Activated CD8-positive, alpha-beta memory T cell treated with anti-CD3 and anti-CD28 coated beads, Interleukin-2, amount 10 ng/mL, durations not matched to agents 7 days and 5 days (primary cell): ENCODE measurements at regions of chr22 and their contacts with region 1.

Region 1: GRCh38 chr22:50250555-50251476 is at the start of gene HDAC10:
- DNase-seq: peak; percentile 92
- ATAC-seq: peak; percentile 88
- H3K4me3 Mint-ChIP-seq: peak within 1 kb of the TSS; percentile 84
- H3K27ac Mint-ChIP-seq: peak within 1 kb of the TSS; percentile 85
- H3K4me1 Mint-ChIP-seq: peaks cover 27% of the 10 kb centered on the region
- H3K27me3 Mint-ChIP-seq: no peaks in the 10 kb centered on the region
- total RNA-seq, gene HDAC10: 75.2 to 96.3 TPM

Region 2: DNA sequence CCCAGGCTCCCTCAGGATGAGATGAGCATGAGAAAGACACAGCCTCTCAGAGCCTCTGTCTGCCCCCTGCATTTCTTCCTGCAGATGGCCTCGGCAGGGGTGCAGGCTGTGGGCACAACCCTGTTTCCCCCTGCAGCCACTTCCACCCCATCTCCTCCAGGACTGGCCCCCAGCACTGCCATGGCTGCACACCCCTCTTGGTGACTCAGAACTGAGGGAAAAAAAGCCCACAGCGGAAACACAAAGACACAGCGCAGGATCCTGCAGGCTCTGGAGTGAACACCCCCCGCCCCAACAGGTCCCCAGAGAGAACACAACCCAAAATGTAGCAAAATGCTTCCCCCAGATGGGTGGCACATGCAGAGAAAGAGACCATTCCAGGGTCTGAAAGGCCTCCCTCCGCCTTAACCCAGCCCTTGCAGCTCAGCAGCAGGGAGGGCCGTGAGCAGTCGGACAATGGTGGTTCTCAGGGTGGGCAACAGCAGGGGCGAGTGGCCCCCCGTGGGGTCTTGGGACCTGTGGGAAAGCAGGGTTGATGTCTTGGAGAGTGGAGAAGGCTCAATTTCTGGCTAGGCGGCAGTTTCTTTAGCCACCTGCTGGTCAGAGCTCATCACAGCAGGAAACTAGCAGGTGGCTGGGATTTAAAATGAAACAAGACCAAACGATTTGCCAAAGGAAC is 13.9 kb before region 1 on chr22:
- CTCF ChIA-PET with region 1: interaction called, 22 read pairs
- DNase-seq: no peak
- ATAC-seq: no peak
- H3K4me3 Mint-ChIP-seq: no peak overlapping the region
- H3K27ac Mint-ChIP-seq: no peak overlapping the region
- H3K4me1 Mint-ChIP-seq: peaks cover 21% of the 10 kb centered on the region
- H3K27me3 Mint-ChIP-seq: no peaks in the 10 kb centered on the region

Region 3: GRCh38 chr22:50269970-50270665 is 19.3 kb after region 1 on chr22 and contains the start of gene MAPK11:
- CTCF ChIA-PET with region 1: interaction called, 25 read pairs
- DNase-seq: peak; percentile 82
- ATAC-seq: peak; percentile 61
- H3K4me3 Mint-ChIP-seq: peak within 1 kb of the TSS; percentile 58
- H3K27ac Mint-ChIP-seq: peak within 1 kb of the TSS; percentile 46
- H3K4me1 Mint-ChIP-seq: peaks cover 14% of the 10 kb centered on the region
- H3K27me3 Mint-ChIP-seq: peaks cover 5% of the 10 kb centered on the region
- total RNA-seq, gene MAPK11: 16.5 to 18.5 TPM

Region 4: GRCh38 chr22:50282361-50282760 is 31.5 kb after region 1 on chr22:
- CTCF ChIA-PET with region 1: no interaction called
- DNase-seq: no peak
- ATAC-seq: no peak
- H3K4me3 Mint-ChIP-seq: no peak overlapping the region
- H3K27ac Mint-ChIP-seq: no peak overlapping the region
- H3K4me1 Mint-ChIP-seq: no peaks in the 10 kb centered on the region
- H3K27me3 Mint-ChIP-seq: no peaks in the 10 kb centered on the region